MCF 10A (cell line): ENCODE measurements at regions of chr1 and their contacts with region 1.

Region 1: DNA sequence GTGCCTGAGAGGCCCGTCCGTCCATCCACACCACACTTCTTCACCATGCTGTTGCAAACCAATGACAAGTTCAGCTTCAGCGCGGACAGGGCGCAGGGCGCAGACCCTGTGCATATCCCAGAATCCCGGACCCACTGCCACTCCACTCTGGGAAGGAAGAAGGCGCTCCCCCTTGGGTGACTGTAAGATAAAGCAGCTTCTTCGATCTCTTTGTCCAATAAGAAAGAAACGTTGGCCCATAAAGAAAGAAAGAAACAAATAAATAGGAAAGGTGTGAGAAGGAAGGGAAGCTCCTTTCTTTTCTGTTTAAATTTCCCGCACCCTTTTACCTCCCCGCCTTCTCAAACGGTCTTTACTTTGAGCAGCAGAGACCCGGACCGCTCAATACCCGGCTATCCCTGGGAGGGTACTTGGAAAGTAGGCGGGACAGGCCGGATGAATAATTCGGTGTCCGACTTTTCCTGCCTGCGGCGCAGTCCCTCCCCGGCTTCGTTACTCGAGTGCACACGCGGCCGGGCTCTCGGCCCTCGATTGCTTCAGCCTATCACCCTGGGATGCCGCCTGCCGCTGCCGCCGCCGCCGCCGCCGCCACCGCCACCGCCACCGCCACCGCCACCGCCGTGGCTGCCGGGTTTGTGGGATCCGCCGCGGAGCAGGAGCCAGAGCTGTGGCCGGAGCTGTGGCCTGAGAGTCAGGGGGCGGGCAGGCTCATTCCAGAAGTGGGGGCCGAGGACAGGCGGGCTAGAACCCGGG is 523 bp upstream of the RASAL2 start:
- DNase-seq: peak; percentile 98
- H3K4me3 Mint-ChIP-seq: peak overlapping the region; percentile 82
- H3K27ac Mint-ChIP-seq: peak overlapping the region; percentile 90
- H3K4me1 Mint-ChIP-seq: peaks cover 38% of the 10 kb centered on the region
- H3K27me3 Mint-ChIP-seq: no peaks in the 10 kb centered on the region
- CTCF ChIP-seq: peak; percentile 7

Region 2: DNA sequence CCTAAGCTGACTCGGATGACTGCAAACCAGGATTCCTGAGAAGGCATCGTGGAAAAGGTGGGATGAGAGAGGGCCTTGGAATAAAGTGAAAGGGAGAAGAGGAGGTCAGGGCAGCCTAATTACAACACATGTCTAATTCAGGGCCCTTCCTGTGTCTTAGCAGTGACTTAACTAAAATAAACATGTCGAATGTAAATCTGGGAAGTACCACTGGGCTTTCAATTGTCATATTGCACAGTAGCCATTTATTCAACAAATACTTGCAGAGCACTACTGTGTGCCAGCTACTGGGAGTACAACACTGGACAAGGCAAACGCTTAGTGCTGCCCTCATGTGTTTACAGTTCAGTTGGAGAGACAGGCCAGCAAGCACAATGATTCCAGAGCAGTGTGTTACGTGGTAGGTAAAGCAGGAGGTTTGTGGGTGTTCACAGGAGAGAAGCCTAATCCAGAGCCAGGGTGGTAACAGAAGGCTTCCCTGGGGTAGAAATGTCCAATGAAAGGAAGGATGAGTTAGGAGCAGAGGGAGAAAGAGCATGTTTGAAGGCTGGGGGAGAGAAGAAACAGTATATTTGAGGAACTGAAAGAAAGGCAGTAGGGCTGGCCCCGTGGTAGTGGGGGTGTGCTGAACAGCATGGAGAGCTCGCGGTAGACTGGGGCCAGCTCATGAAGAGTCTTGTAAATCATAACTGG is 37.5 kb before region 1 on chr1:
- CTCF ChIA-PET with region 1: interaction called, 28 read pairs
- POLR2A ChIA-PET with region 1: interaction called, 10 read pairs
- intact Hi-C with region 1: loop called (anchors 1 kb)
- DNase-seq: peak; percentile 77
- H3K4me3 Mint-ChIP-seq: no peak overlapping the region
- H3K27ac Mint-ChIP-seq: peak overlapping the region; percentile 14
- H3K4me1 Mint-ChIP-seq: peaks cover 50% of the 10 kb centered on the region
- H3K27me3 Mint-ChIP-seq: no peaks in the 10 kb centered on the region
- CTCF ChIP-seq: no peak

Region 3: GRCh38 chr1:178109348-178110143 is 16.2 kb after region 1 on chr1:
- CTCF ChIA-PET with region 1: interaction called, 7 read pairs
- POLR2A ChIA-PET with region 1: interaction called, 100 read pairs
- intact Hi-C with region 1: no loop called
- DNase-seq: no peak
- H3K4me3 Mint-ChIP-seq: no peak overlapping the region
- H3K27ac Mint-ChIP-seq: peak overlapping the region; percentile 75
- H3K4me1 Mint-ChIP-seq: peaks cover 22% of the 10 kb centered on the region
- H3K27me3 Mint-ChIP-seq: no peaks in the 10 kb centered on the region
- CTCF ChIP-seq: no peak

Region 4: DNA sequence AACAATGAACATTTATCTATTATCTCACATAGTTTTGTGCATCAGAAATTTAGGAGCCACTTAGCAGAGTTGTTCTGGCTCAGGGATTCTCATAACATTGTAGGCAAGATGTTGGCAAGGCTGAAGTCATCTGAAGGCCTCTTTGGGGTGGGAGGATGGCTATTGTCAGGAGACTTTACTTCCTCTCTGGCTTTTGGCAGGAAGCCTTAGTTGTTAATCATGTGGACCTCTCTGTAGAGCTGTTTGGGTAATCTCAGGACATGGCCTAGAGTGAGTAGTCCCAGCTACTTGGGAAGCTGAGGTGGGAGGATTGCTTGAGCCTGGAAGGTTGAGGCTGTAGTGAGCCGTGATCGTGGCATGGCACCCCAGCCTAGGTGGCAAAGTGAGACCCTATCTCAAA is 40.7 kb after region 1 on chr1:
- CTCF ChIA-PET with region 1: interaction called, 13 read pairs
- POLR2A ChIA-PET with region 1: interaction called, 14 read pairs
- intact Hi-C with region 1: no loop called
- DNase-seq: peak; percentile 61
- H3K4me3 Mint-ChIP-seq: no peak overlapping the region
- H3K27ac Mint-ChIP-seq: peak overlapping the region; percentile 57
- H3K4me1 Mint-ChIP-seq: peaks cover 34% of the 10 kb centered on the region
- H3K27me3 Mint-ChIP-seq: no peaks in the 10 kb centered on the region
- CTCF ChIP-seq: no peak

Region 5: GRCh38 chr1:178172954-178173353 is 79.6 kb after region 1 on chr1:
- CTCF ChIA-PET with region 1: interaction called, 3 read pairs
- POLR2A ChIA-PET with region 1: interaction called, 5 read pairs
- intact Hi-C with region 1: loop called (anchors 5 kb)
- DNase-seq: peak; percentile 81
- H3K4me3 Mint-ChIP-seq: no peak overlapping the region
- H3K27ac Mint-ChIP-seq: peak overlapping the region; percentile 88
- H3K4me1 Mint-ChIP-seq: peaks cover 46% of the 10 kb centered on the region
- H3K27me3 Mint-ChIP-seq: no peaks in the 10 kb centered on the region
- CTCF ChIP-seq: no peak

Region 6: DNA sequence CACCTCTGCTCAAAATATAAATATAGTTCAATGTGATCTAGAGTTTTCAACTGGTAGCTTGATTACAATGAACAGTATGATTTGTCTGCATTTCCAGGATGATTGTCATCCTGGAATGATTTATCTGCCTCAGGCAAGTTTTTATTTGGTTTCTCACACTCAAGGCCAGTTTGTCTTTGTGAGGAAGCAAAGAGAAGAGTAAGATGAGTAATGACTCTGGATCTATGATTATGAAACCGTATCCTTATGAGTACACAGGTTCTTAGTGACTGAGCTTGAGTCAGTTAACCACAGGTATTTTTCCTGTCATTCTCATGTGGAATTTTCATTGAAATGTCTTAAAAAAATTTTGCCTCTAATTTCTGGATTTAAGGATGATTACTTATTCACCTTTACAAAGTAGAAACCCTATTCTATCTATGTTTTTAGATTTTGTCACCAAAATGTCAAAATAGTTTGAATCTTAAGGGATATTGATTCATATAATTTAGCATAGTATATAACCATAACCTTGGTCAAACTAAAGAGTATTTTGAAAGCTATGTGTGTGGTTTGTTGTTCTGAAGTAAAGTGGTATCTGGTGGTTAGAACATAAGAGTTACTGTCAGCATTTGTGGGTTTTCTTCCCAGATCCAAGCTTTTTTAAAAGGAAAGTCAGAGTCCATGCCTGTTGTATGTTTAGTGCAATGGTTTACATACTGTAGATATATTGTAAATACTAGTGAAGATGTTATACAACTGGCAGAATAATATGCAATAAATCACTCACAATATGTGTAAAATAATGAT is 145.5 kb after region 1 on chr1:
- CTCF ChIA-PET with region 1: interaction called, 8 read pairs
- POLR2A ChIA-PET with region 1: interaction called, 86 read pairs
- intact Hi-C with region 1: loop called (anchors 1 kb)
- DNase-seq: peak; percentile 100
- H3K4me3 Mint-ChIP-seq: peak overlapping the region; percentile 57
- H3K27ac Mint-ChIP-seq: peak overlapping the region; percentile 96
- H3K4me1 Mint-ChIP-seq: peaks cover 69% of the 10 kb centered on the region
- H3K27me3 Mint-ChIP-seq: no peaks in the 10 kb centered on the region
- CTCF ChIP-seq: no peak

Region 7: DNA sequence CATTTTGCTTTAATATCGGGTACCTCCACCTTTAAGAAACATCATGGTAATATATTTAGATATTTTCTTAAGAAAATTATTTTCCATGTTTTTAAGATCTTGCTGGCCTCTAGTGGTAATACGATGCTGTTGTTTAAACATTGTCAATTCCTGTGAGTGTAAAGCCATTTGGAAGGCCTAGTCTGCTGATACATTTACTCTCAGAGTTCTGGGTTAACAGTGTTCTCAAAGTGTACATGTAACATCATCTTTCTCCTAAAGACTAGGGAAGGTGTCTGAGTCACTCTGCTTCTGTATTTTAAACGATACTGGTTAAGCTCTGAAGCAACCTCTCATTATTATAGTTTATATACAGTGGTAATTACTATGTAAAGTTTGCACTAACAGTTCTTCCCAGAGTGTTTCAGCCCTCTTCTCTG is 189.6 kb after region 1 on chr1:
- CTCF ChIA-PET with region 1: interaction called, 16 read pairs
- POLR2A ChIA-PET with region 1: interaction called, 19 read pairs
- intact Hi-C with region 1: loop called (anchors 1 kb)
- DNase-seq: peak; percentile 85
- H3K4me3 Mint-ChIP-seq: no peak overlapping the region
- H3K27ac Mint-ChIP-seq: peak overlapping the region; percentile 28
- H3K4me1 Mint-ChIP-seq: peaks cover 38% of the 10 kb centered on the region
- H3K27me3 Mint-ChIP-seq: no peaks in the 10 kb centered on the region
- CTCF ChIP-seq: peak; percentile 77